ENCODE measurements at regions of chr16 and their contacts with region 1.

Region 1: GRCh38 chr16:72093448-72094265 is at the starts of genes DHX38 and TXNL4B:
- DNase-seq: peak; percentile 96
- ATAC-seq: peak; percentile 99
- total RNA-seq, gene DHX38: 40.8 TPM
- total RNA-seq, gene TXNL4B: 7.7 TPM

Region 2: DNA sequence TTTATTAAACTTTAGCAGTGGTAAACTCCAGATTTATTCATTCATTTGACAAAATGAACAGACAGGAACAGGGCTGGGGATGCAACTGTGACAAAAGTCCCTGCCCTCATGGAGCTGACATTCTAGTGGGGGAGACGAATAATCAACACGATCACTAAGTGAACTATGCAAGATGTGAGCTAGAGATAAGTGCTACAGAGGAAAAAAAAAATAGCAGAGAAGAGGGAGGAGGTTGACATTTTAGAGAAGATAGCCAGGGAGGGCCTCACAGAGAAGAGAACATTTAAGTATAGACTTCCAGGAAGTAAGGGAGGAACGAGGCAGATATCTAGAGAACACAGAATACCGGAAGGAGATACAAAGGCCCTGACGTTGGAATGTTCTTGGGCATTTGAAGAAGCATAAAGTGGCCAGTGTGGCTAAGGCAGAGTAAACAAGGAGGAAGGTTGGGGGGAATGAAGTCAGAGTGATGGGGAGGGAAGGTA is 267.1 kb before region 1 on chr16:
- intact Hi-C with region 1: no loop called
- DNase-seq: no peak
- ATAC-seq: no peak

Region 3: DNA sequence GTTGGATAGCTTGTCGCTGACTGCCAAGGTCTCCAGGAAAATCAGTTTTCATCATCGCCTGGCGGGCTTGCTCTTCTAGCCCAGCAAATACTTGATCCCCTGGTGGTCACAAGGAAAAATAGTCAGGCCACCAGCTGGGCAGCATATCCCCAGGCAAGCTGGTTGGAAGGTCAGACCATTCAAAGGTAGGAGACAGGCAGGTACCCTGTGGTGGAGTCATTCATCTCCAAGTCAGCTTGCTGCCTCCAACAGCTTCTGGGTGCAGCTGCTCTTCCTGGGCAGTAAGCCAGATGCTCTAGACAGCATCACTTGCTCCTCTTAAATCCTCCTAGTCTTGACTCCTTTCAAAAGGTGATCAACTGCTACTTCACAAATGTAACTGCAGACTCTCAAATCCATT is 225.7 kb before region 1 on chr16:
- intact Hi-C with region 1: no loop called
- DNase-seq: no peak
- ATAC-seq: no peak

Region 4: GRCh38 chr16:71933913-71934695 is 159.6 kb before region 1 on chr16:
- intact Hi-C with region 1: loop called (anchors 10 kb)
- DNase-seq: no peak
- ATAC-seq: no peak

Region 5: GRCh38 chr16:72008424-72009216 is 85.0 kb before region 1 on chr16 and contains the start of gene DHODH:
- intact Hi-C with region 1: loop called (anchors 1 kb)
- DNase-seq: peak; percentile 99
- ATAC-seq: peak; percentile 100
- total RNA-seq, gene DHODH: 8.3 TPM

Region 6: DNA sequence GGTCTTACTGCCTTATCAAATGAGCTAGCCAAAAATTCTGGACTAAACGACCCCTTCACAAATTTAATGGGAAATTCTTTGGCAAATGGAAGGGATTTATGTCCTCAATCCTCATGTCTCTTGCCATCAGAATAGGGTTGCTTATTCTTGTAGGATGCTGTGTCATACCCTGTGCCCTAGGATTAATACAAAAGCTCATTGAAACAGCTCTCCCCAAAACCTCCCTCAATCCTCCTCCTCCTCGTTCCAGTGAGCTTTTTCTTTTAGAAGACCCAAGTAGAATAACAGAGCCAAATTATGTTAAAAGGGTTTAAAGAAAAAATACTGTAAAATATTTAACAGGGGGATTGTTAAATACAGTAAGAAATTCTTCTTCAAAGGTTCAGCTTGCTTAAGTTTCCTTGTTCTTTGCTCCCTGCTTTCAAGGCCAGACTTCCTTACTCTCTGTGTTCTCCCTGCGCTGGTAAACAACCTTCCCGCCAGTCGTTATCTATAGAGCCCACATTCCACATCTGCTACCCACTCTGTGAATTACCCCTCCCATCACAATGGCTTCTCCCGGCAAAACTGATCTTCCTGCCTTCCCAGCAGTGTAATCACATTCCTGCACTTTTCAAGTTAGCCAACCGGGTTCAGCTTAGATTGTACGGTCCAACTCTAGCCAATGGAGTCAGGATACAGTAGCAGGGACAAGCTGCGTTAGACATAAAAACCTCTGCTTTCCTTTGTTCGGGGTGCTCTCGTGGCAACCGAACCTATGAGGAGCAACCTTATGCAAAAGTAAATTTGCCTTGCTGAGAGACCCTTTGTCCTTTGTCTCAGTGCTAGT is 20.9 kb before region 1 on chr16:
- intact Hi-C with region 1: loop called (anchors 1 kb)
- DNase-seq: no peak
- ATAC-seq: peak; percentile 80

Measured in Right ventricle myocardium inferior (tissue), 1 donor.